GM12878 (cell line): ENCODE measurements at regions of chr10 and their contacts with region 1.

Region 1: GRCh38 chr10:86439544-86439943 is 72.9 kb upstream of the GRID1 start:
- DNase-seq: no peak
- ATAC-seq: no peak
- H3K4me3 ChIP-seq: no peak overlapping the region
- H3K27ac ChIP-seq: no peak overlapping the region
- H3K4me1 ChIP-seq: 0 out of 2 replicates have a peak, but pooled peaks cover 5% of the 10 kb centered on the region
- H3K27me3 ChIP-seq: no peaks in the 10 kb centered on the region
- CTCF ChIP-seq: no peak
- EP300 ChIP-seq: no peak
- POLR2A ChIP-seq: no peak
- RAD21 ChIP-seq: no peak

Region 2: DNA sequence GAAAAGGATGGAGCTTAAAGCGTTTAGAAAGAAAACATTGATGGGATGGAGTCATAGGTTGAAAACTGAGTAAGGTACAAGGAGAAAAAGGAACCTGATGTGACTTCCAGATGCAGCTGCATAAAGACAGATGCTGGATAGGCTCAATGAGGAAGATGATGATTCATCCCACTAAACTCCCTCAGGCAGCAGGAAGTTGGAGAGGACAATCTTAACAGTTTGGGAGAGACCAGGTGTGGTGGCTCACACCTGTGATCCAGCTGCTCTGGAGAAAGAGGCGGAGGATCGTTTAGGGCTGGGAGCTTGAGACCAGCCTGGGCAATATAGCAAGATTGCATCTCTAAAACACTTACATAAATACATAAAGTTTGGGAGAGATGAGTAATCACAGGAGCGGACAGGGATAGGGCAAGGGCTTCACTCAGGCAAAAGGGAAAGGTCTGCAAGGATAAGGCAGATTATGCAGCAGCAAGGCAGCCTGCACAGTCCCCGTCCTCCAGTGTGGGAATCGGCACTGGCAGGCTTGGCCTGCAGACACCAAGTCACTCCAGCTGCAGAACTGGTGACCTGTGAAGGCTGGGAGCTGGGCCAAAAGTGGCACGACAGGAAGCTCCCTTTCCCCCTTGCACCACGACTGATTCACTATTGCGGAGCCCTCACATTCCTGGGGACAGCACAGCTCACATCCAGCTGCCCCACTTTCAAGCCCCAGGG is 511.4 kb before region 1 on chr10:
- CTCF ChIA-PET with region 1: no interaction called
- POLR2A ChIA-PET with region 1: no interaction called
- RAD21 ChIA-PET with region 1: no interaction called
- SMC1A ChIA-PET with region 1: no interaction called
- in situ Hi-C with region 1: no loop called
- intact Hi-C with region 1: no loop called
- DNase-seq: no peak
- ATAC-seq: no peak
- H3K4me3 ChIP-seq: no peak overlapping the region
- H3K27ac ChIP-seq: no peak overlapping the region
- H3K4me1 ChIP-seq: no peaks in the 10 kb centered on the region
- H3K27me3 ChIP-seq: no peaks in the 10 kb centered on the region
- CTCF ChIP-seq: no peak
- EP300 ChIP-seq: no peak
- POLR2A ChIP-seq: no peak
- RAD21 ChIP-seq: no peak

Region 3: GRCh38 chr10:86197166-86197790 is 242.3 kb before region 1 on chr10:
- CTCF ChIA-PET with region 1: no interaction called
- POLR2A ChIA-PET with region 1: no interaction called
- RAD21 ChIA-PET with region 1: no interaction called
- SMC1A ChIA-PET with region 1: no interaction called
- in situ Hi-C with region 1: no loop called
- intact Hi-C with region 1: no loop called
- DNase-seq: no peak
- ATAC-seq: no peak
- H3K4me3 ChIP-seq: no peak overlapping the region
- H3K27ac ChIP-seq: no peak overlapping the region
- H3K4me1 ChIP-seq: no peaks in the 10 kb centered on the region
- H3K27me3 ChIP-seq: peaks cover 0 to 4% of the 10 kb centered on the region in 2 experiments; a peak in 2 of 4 replicates
- CTCF ChIP-seq: no peak
- EP300 ChIP-seq: no peak
- POLR2A ChIP-seq: no peak
- RAD21 ChIP-seq: no peak

Region 4: DNA sequence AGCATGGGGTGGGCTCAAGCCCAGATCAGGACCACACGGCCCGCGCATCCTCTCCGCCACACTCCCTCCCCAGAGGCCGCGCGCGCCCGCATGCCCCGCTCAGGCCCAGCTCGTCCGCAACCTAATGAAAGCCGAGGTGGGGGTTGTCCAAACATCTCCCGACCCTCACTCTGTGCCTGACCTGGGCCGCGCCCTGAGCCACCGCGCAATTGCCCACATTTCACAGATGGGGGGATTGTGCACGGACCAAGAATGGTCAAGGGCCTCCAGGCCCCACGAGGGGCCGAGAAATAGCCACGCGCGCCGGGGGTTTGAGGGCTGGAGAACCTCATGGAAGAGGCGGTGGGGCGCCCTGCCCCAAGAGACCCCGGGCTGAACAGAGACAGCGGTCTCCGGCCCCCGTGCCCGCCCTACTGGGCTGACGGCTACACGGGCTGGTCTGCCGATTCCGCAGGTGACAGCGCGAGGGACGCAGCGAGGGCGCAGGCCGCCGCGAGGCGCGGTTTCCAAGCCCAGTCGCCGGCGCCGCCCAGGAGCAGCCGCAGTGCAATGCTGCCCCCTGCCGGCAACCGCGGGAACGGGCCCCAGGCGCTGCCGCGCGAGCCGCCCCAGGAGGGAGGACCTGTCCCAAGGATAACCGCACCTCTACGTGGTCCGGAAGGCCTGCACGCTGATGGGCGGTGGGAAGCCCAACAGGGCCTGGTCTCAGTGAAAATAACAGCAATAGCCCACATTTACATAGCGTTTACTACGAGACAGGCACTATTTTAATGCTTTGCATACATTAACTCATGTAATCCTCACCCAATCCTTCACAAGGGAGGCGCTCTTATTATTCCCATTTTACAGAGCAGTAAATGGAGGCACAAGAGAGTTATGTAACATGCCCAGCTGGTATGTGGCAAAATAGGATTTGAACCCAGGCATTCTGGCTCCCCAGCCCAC is 62.4 kb before region 1 on chr10:
- CTCF ChIA-PET with region 1: no interaction called
- POLR2A ChIA-PET with region 1: no interaction called
- RAD21 ChIA-PET with region 1: no interaction called
- SMC1A ChIA-PET with region 1: no interaction called
- in situ Hi-C with region 1: no loop called
- intact Hi-C with region 1: no loop called
- DNase-seq: no peak
- ATAC-seq: peak; percentile 99
- H3K4me3 ChIP-seq: 0 out of 2 replicates have a peak overlapping the region, but pooled peaks have one; percentile 32
- H3K27ac ChIP-seq: no peak overlapping the region
- H3K4me1 ChIP-seq: no peaks in the 10 kb centered on the region
- H3K27me3 ChIP-seq: no peaks in the 10 kb centered on the region; a peak in 1 of 4 replicates
- CTCF ChIP-seq: peak; percentile 91 to 92 (median 91); a peak in 5 of 6 replicates
- EP300 ChIP-seq: no peak
- POLR2A ChIP-seq: no peak
- RAD21 ChIP-seq: peak; percentile 74

Region 5: GRCh38 chr10:86423739-86424138 is 15.8 kb before region 1 on chr10:
- CTCF ChIA-PET with region 1: no interaction called
- POLR2A ChIA-PET with region 1: no interaction called
- RAD21 ChIA-PET with region 1: no interaction called
- SMC1A ChIA-PET with region 1: interaction called, 7 read pairs
- in situ Hi-C with region 1: no loop called
- intact Hi-C with region 1: loop called (anchors 2 kb)
- DNase-seq: no peak
- ATAC-seq: no peak
- H3K4me3 ChIP-seq: no peak overlapping the region
- H3K27ac ChIP-seq: no peak overlapping the region
- H3K4me1 ChIP-seq: no peaks in the 10 kb centered on the region
- H3K27me3 ChIP-seq: no peaks in the 10 kb centered on the region
- CTCF ChIP-seq: no peak
- EP300 ChIP-seq: no peak
- POLR2A ChIP-seq: no peak
- RAD21 ChIP-seq: no peak

Region 6: DNA sequence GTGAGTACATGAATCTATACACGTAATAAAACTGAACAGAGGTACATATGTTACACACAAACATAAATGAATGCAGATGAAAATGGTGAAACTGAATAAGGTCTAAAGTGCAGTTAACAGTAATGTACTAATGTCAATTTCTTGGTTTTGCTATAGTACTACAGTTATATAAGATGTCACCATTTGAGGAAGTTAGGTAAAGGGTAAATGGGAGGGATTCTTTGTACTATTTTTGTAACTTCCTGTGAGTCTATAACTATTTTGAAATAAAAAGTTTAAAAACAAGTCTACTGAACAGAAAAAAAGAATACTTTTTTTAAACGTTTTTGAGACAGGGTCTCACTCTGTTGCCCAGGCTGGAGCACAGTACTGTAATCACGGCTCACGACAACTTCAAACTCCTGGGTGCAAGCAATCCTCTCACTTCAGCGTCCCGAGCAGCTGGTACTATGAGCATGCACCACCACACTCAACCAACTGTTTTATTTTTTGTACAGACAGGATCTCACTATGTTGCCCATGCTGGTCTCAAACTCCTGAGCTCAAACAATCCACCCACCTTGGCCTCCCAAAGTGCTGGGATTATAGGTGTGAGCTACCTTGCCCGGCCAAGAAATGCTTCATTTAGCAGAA is 10.5 kb after region 1 on chr10:
- CTCF ChIA-PET with region 1: interaction called, 18 read pairs
- POLR2A ChIA-PET with region 1: interaction called, 4 read pairs
- RAD21 ChIA-PET with region 1: no interaction called
- SMC1A ChIA-PET with region 1: interaction called, 4 read pairs
- in situ Hi-C with region 1: no loop called
- intact Hi-C with region 1: no loop called
- DNase-seq: no peak
- ATAC-seq: peak; percentile 41; the same call in 1 of the 3 replicates
- H3K4me3 ChIP-seq: no peak overlapping the region
- H3K27ac ChIP-seq: no peak overlapping the region
- H3K4me1 ChIP-seq: no peaks in the 10 kb centered on the region; the same call in 1 of the 2 replicates
- H3K27me3 ChIP-seq: no peaks in the 10 kb centered on the region
- CTCF ChIP-seq: no peak
- EP300 ChIP-seq: no peak
- POLR2A ChIP-seq: no peak
- RAD21 ChIP-seq: no peak

Region 7: GRCh38 chr10:86710987-86711512 is 271.5 kb after region 1 on chr10:
- CTCF ChIA-PET with region 1: no interaction called
- POLR2A ChIA-PET with region 1: no interaction called
- RAD21 ChIA-PET with region 1: no interaction called
- SMC1A ChIA-PET with region 1: no interaction called
- in situ Hi-C with region 1: no loop called
- intact Hi-C with region 1: no loop called
- DNase-seq: peak; percentile 45
- ATAC-seq: peak; percentile 94
- H3K4me3 ChIP-seq: peak overlapping the region; percentile 92
- H3K27ac ChIP-seq: peak overlapping the region; percentile 73
- H3K4me1 ChIP-seq: peaks cover 4% of the 10 kb centered on the region; the same call in 1 of the 2 replicates
- H3K27me3 ChIP-seq: no peaks in the 10 kb centered on the region
- CTCF ChIP-seq: peak; percentile 73 to 98 (median 90); a peak in 5 of 6 replicates
- EP300 ChIP-seq: no peak
- POLR2A ChIP-seq: peak; percentile 81
- RAD21 ChIP-seq: peak; percentile 77